Caco-2 (cell line): ENCODE measurements at regions of chr14 and their contacts with region 1.

Region 1: DNA sequence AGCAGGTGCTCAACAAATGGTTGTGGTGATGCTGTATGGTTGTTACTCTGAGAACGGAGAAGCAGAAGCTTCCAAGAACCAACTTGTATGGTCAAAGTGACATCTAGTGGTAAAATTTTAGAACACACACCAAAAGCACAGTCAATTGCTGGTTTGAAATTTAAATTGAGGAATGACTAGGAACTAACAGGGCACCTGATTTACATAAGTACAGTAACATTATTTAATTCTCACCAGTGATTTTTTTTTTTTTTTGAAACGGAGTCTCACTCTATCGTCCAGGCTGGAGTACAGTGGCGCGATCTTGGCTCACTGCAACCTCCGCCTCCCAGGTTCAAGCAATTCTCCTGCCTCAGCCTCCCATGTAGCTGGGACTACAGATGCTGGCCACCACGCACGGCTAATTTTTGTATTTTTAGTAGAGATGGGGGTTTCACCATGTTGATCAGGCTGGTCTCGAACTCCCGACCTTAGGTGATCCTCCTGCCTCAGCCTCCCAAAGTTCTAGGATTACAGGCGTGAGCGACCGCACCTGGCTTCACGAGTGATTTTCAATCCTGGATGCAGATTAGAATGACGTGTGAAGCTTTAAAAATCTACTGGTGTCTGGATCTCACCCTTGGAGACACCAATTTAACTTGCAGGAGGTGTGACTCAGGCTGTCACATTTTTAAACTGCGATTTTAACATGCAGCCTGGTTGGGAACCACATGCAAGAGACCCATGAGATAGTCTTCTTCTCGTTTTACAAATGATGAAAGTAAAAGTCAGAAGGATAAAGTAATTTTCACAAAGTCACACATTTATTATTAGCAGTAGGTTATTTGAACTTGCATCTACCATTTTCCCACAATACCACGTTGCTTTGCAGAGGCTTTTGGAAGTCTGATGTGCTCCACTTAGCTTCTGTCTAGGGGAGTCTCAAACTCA is 14.1 kb upstream of the NUMB start:
- DNase-seq: peak in 1 of 2 experiments; percentile 61
- H3K4me3 ChIP-seq: no peak overlapping the region
- H3K4me3 Mint-ChIP-seq: no peak overlapping the region
- H3K27ac Mint-ChIP-seq: no peak overlapping the region
- H3K4me1 ChIP-seq: no peaks in the 10 kb centered on the region
- H3K4me1 Mint-ChIP-seq: no peaks in the 10 kb centered on the region
- H3K27me3 ChIP-seq: no peaks in the 10 kb centered on the region
- H3K27me3 Mint-ChIP-seq: no peaks in the 10 kb centered on the region
- CTCF ChIP-seq: peak; percentile 37 to 65

Region 2: GRCh38 chr14:73173092-73173735 is 299.2 kb before region 1 on chr14:
- CTCF ChIA-PET with region 1: no interaction called
- POLR2A ChIA-PET with region 1: no interaction called
- intact Hi-C with region 1: loop called (anchors 1 kb)
- DNase-seq: peak in 1 of 2 experiments; percentile 17
- H3K4me3 ChIP-seq: no peak overlapping the region
- H3K4me3 Mint-ChIP-seq: no peak overlapping the region
- H3K27ac Mint-ChIP-seq: no peak overlapping the region
- H3K4me1 ChIP-seq: no peaks in the 10 kb centered on the region
- H3K4me1 Mint-ChIP-seq: no peaks in the 10 kb centered on the region
- H3K27me3 ChIP-seq: no peaks in the 10 kb centered on the region
- H3K27me3 Mint-ChIP-seq: no peaks in the 10 kb centered on the region
- CTCF ChIP-seq: peak; percentile 18 to 41

Region 3: GRCh38 chr14:73231981-73232851 is 240.2 kb before region 1 on chr14:
- CTCF ChIA-PET with region 1: interaction called, 8 read pairs
- POLR2A ChIA-PET with region 1: no interaction called
- intact Hi-C with region 1: loop called (anchors 1 kb)
- DNase-seq: peak; percentile 67 to 68
- H3K4me3 ChIP-seq: no peak overlapping the region
- H3K4me3 Mint-ChIP-seq: no peak overlapping the region
- H3K27ac Mint-ChIP-seq: no peak overlapping the region
- H3K4me1 ChIP-seq: peaks cover 24% of the 10 kb centered on the region
- H3K4me1 Mint-ChIP-seq: peaks cover 15% of the 10 kb centered on the region
- H3K27me3 ChIP-seq: no peaks in the 10 kb centered on the region
- H3K27me3 Mint-ChIP-seq: no peaks in the 10 kb centered on the region
- CTCF ChIP-seq: peak; percentile 46 to 71

Region 4: DNA sequence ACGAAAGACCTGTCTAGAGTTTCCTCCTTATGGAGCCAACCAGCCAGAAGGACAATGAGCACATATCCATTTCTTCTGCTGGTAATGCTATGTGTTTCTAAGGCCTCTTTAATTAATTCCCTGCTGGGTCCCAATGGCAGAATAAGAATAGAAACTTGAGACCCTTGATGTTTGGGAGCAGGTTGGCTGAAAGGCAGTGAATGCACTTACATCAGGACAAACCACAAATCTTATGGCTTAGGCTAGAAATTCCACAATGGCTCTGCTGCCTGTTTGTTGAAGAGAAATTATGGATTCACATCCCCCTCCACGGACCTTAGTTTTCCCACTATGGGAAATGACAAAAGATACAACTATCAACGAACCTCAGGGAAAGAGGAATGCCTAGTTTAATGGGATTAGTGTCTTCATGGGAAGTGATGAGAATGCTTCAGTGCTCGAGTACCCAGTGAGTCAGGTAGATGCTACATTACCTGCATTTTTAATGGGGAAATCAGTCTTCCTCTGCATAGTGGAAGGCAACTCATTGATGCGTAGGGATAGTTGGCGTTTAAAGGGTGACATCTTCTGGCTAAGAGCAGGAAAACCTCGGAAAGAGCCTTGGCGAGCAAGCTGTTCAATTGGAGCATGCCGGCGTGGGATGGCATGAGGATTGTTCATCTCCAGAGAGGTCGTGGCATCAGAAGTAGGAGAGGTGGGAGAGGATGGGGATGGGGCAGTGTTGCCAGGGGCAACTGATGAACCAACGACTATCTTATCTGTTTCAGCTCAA is 188.7 kb before region 1 on chr14:
- CTCF ChIA-PET with region 1: interaction called, 5 read pairs
- POLR2A ChIA-PET with region 1: no interaction called
- intact Hi-C with region 1: loop called (anchors 5 kb)
- DNase-seq: no peak
- H3K4me3 ChIP-seq: no peak overlapping the region
- H3K4me3 Mint-ChIP-seq: no peak overlapping the region
- H3K27ac Mint-ChIP-seq: no peak overlapping the region
- H3K4me1 ChIP-seq: no peaks in the 10 kb centered on the region
- H3K4me1 Mint-ChIP-seq: peaks cover 6% of the 10 kb centered on the region
- H3K27me3 ChIP-seq: no peaks in the 10 kb centered on the region
- H3K27me3 Mint-ChIP-seq: no peaks in the 10 kb centered on the region
- CTCF ChIP-seq: no peak

Region 5: GRCh38 chr14:73295198-73295796 is 177.2 kb before region 1 on chr14:
- CTCF ChIA-PET with region 1: interaction called, 48 read pairs
- POLR2A ChIA-PET with region 1: interaction called, 4 read pairs
- intact Hi-C with region 1: loop called (anchors 1 kb)
- DNase-seq: peak in 1 of 2 experiments; percentile 37
- H3K4me3 ChIP-seq: no peak overlapping the region
- H3K4me3 Mint-ChIP-seq: no peak overlapping the region
- H3K27ac Mint-ChIP-seq: no peak overlapping the region
- H3K4me1 ChIP-seq: peaks cover 23% of the 10 kb centered on the region
- H3K4me1 Mint-ChIP-seq: peaks cover 6% of the 10 kb centered on the region
- H3K27me3 ChIP-seq: no peaks in the 10 kb centered on the region
- H3K27me3 Mint-ChIP-seq: no peaks in the 10 kb centered on the region
- CTCF ChIP-seq: peak; percentile 60 to 63

Region 6: DNA sequence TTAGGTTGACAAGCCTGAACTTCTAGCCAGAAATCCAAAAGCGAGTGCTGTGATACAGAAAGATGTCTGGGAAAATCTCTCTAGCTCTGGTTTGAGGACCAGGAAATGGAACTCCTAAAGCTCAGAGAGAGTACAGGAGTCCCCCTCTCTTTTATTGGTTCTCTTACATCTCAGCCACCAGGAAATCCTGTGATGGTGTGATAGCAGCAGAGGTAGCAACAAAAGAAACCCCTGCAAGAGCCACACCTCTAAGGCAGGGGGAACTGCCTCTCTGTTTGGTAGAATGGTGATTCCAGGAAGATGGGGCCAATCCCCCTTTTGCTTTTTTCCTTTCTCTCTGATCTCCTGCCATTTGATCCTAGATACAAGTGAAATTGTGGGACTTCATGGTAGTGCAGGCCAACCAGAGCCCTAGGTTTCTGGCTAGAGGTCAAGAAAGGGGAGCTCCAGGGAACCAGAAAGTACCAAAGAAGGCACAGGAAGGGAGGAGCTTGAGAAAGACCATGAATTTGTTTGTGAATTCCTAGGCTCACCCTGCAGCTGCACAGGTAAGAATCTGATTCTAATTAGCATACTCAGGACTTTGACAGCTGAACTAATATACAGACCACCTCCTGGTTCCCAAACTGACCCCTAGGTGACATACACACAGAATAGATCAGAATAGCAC is 146.7 kb before region 1 on chr14:
- CTCF ChIA-PET with region 1: no interaction called
- POLR2A ChIA-PET with region 1: no interaction called
- intact Hi-C with region 1: loop called (anchors 1 kb)
- DNase-seq: no peak
- H3K4me3 ChIP-seq: no peak overlapping the region
- H3K4me3 Mint-ChIP-seq: no peak overlapping the region
- H3K27ac Mint-ChIP-seq: no peak overlapping the region
- H3K4me1 ChIP-seq: peaks cover 45% of the 10 kb centered on the region
- H3K4me1 Mint-ChIP-seq: peaks cover 30% of the 10 kb centered on the region
- H3K27me3 ChIP-seq: no peaks in the 10 kb centered on the region
- H3K27me3 Mint-ChIP-seq: no peaks in the 10 kb centered on the region
- CTCF ChIP-seq: no peak

Region 7: DNA sequence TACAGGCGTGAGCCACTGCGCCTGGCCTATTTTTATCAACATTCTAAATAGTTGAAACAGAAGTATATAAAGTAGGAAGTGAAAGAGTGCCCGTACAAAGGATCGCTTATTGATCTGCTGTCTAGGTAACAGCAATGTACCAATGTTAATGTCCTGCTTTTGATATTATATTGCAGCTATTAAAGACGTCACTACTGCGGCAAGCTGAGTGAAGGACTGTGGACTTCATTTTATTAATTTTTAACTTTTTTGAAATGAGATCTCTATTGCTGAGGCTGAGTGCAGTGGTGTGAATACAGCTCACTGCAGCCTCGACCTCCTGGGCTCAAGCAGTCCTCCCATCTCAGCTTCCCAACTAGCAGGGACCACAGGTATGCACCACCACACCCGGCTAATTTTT is 390.0 kb after region 1 on chr14:
- CTCF ChIA-PET with region 1: no interaction called
- POLR2A ChIA-PET with region 1: no interaction called
- intact Hi-C with region 1: no loop called
- DNase-seq: no peak
- H3K4me3 ChIP-seq: no peak overlapping the region
- H3K4me3 Mint-ChIP-seq: no peak overlapping the region
- H3K27ac Mint-ChIP-seq: no peak overlapping the region
- H3K4me1 ChIP-seq: no peaks in the 10 kb centered on the region
- H3K4me1 Mint-ChIP-seq: no peaks in the 10 kb centered on the region
- H3K27me3 ChIP-seq: no peaks in the 10 kb centered on the region
- H3K27me3 Mint-ChIP-seq: no peaks in the 10 kb centered on the region
- CTCF ChIP-seq: no peak